Posterior vena cava (tissue), 2 donors: ENCODE measurements at regions of chr18 and their contacts with region 1.

Region 1: GRCh38 chr18:26322890-26323653 is 96.8 kb downstream of the TAF4B start:
- DNase-seq: no peak

Region 2: GRCh38 chr18:26312205-26312604 is 10.9 kb before region 1 on chr18:
- intact Hi-C with region 1: loop called in 1 of 2 experiments (anchors 2 kb)
- DNase-seq: no peak